B cell (primary cell): ENCODE measurements at regions of chr10 and their contacts with region 1.

Region 1: GRCh38 chr10:32055813-32056600 is at the start of gene KIF5B:
- DNase-seq: peak; percentile 93
- ATAC-seq: peak; percentile 85
- H3K4me3 ChIP-seq: peak within 1 kb of the TSS; percentile 64 to 97 (median 85)
- H3K4me3 Mint-ChIP-seq: peak within 1 kb of the TSS; percentile 98
- H3K27ac ChIP-seq: peak within 1 kb of the TSS; percentile 80 to 90
- H3K27ac Mint-ChIP-seq: peak within 1 kb of the TSS; percentile 97
- H3K4me1 ChIP-seq: peaks cover 31 to 47% of the 10 kb centered on the region in 2 donors
- H3K4me1 Mint-ChIP-seq: peaks cover 53% of the 10 kb centered on the region
- H3K27me3 ChIP-seq: no peaks in the 10 kb centered on the region
- H3K27me3 Mint-ChIP-seq: no peaks in the 10 kb centered on the region
- CTCF ChIP-seq: no peak
- total RNA-seq, gene KIF5B: 40.1 and 44.1 TPM in 2 replicates

Region 2: DNA sequence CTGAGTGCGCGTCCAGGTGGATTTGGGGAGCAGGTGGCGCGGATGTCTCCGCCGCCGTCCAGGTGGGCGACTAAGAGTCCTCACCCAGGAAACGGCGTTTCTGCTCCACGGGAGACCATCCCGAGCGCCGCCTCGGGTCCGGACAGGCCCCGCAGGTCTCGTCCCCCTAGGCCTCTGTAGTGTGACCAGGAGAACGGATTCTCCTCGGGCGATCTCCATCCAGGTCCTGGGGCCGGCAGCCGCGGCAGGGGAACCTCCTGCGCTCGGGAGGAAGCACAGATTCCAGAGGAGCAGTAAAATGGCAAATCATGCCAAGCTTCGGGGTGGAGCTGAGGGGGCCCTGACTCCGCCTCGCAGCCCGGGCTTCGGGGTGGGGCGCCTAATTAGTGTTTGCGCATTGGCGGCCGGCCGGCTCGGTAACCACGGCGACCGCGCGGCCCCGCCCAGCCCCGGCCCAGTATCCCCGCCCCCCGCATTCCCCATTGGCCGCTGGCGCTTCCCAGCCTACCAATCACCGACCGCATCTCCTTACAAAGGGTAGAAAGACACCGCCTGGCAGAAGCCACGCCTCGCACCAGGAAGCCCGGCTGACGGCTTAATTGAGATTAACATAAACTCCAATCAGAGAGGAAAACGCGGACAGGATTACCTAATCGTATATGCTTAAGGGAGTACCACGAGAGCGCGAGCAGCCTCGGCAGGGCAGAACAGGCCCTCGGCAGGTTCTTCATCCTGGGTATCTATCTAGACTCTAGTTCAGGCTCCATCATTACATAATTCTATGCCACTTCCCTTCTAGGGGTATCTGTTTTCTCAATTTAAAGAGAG is 296.0 kb before region 1 on chr10:
- CTCF ChIA-PET with region 1: no interaction called
- POLR2A ChIA-PET with region 1: no interaction called
- intact Hi-C with region 1: loop called (anchors 1 kb)
- DNase-seq: peak; percentile 96
- ATAC-seq: peak; percentile 93
- H3K4me3 ChIP-seq: peak overlapping the region; percentile 71 to 98 (median 94)
- H3K4me3 Mint-ChIP-seq: peak overlapping the region; percentile 92
- H3K27ac ChIP-seq: peak overlapping the region; percentile 85 to 86
- H3K27ac Mint-ChIP-seq: peak overlapping the region; percentile 97
- H3K4me1 ChIP-seq: peaks cover 5 to 14% of the 10 kb centered on the region in 2 donors
- H3K4me1 Mint-ChIP-seq: peaks cover 15% of the 10 kb centered on the region
- H3K27me3 ChIP-seq: no peaks in the 10 kb centered on the region
- H3K27me3 Mint-ChIP-seq: no peaks in the 10 kb centered on the region
- CTCF ChIP-seq: no peak

Region 3: GRCh38 chr10:31906039-31906438 is 150.0 kb before region 1 on chr10:
- CTCF ChIA-PET with region 1: no interaction called
- POLR2A ChIA-PET with region 1: no interaction called
- intact Hi-C with region 1: no loop called
- DNase-seq: no peak
- ATAC-seq: no peak
- H3K4me3 ChIP-seq: no peak overlapping the region
- H3K4me3 Mint-ChIP-seq: no peak overlapping the region
- H3K27ac ChIP-seq: no peak overlapping the region
- H3K27ac Mint-ChIP-seq: no peak overlapping the region
- H3K4me1 ChIP-seq: peaks cover 3 to 4% of the 10 kb centered on the region in 2 donors
- H3K4me1 Mint-ChIP-seq: peaks cover 37% of the 10 kb centered on the region
- H3K27me3 ChIP-seq: no peaks in the 10 kb centered on the region
- H3K27me3 Mint-ChIP-seq: no peaks in the 10 kb centered on the region
- CTCF ChIP-seq: no peak

Region 4: DNA sequence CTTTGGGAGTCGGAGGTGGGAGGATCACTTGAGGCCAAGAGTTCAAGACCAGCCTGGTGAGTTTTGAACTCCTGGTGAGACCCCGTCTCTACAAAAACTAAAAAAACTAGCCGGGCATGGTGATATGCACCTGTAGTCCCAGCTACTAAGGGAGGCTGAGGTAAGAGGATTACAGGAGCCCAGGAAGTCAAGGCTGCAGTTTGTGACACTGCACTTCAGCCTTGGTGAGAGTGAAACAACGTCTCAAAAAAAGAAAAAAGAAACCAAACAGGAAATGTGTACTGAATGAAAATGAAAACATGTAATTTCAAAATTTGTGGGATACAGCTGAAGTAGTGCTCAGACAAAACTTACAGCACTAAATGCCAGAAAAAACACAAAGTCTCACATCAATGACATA is 135.0 kb before region 1 on chr10:
- CTCF ChIA-PET with region 1: no interaction called
- POLR2A ChIA-PET with region 1: no interaction called
- intact Hi-C with region 1: no loop called
- DNase-seq: no peak
- ATAC-seq: no peak
- H3K4me3 ChIP-seq: no peak overlapping the region
- H3K4me3 Mint-ChIP-seq: no peak overlapping the region
- H3K27ac ChIP-seq: no peak overlapping the region
- H3K27ac Mint-ChIP-seq: no peak overlapping the region
- H3K4me1 ChIP-seq: peaks cover 21 to 26% of the 10 kb centered on the region in 2 donors
- H3K4me1 Mint-ChIP-seq: peaks cover 48% of the 10 kb centered on the region
- H3K27me3 ChIP-seq: no peaks in the 10 kb centered on the region
- H3K27me3 Mint-ChIP-seq: no peaks in the 10 kb centered on the region
- CTCF ChIP-seq: no peak

Region 5: DNA sequence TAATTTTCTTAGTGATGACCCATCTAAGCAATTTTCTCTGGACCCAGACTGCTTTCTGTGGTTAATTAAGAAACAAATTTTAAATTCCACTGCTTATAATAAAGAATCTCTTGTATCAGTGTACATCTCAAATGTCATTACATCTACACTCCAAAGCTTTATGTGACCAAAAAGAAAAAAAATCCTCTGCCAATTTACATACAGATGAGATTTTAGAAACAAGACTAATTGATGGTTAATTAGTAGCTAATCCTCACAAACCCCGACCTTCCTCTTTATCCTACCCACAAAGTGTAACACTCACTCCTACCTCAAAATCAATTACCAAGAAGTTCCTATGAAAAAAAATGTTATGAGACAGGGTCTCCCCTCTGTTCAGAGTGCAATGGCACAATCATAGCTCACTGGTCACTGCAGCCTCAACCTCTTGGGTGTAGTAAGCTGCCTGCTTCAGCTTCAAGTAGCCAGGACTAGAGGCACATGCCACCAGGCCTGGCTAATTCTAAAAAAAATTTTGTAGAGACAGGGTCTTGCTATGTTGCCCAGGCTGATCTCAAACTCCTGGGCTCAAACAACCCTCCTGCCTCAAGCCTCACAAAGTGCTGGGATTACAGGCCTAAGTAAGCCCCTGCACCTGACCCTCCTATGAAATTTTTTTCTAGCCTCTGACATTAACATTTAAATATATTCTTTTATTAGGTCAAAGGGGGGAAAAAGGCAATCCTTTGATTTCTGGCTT is 14.5 kb before region 1 on chr10:
- CTCF ChIA-PET with region 1: interaction called, 3 read pairs
- POLR2A ChIA-PET with region 1: no interaction called
- intact Hi-C with region 1: loop called (anchors 2 kb)
- DNase-seq: no peak
- ATAC-seq: no peak
- H3K4me3 ChIP-seq: no peak overlapping the region
- H3K4me3 Mint-ChIP-seq: no peak overlapping the region
- H3K27ac ChIP-seq: peak overlapping the region in 1 of 2 donors; percentile 32
- H3K27ac Mint-ChIP-seq: no peak overlapping the region
- H3K4me1 ChIP-seq: no peaks in the 10 kb centered on the region
- H3K4me1 Mint-ChIP-seq: peaks cover 34% of the 10 kb centered on the region
- H3K27me3 ChIP-seq: no peaks in the 10 kb centered on the region
- H3K27me3 Mint-ChIP-seq: no peaks in the 10 kb centered on the region
- CTCF ChIP-seq: no peak

Region 6: DNA sequence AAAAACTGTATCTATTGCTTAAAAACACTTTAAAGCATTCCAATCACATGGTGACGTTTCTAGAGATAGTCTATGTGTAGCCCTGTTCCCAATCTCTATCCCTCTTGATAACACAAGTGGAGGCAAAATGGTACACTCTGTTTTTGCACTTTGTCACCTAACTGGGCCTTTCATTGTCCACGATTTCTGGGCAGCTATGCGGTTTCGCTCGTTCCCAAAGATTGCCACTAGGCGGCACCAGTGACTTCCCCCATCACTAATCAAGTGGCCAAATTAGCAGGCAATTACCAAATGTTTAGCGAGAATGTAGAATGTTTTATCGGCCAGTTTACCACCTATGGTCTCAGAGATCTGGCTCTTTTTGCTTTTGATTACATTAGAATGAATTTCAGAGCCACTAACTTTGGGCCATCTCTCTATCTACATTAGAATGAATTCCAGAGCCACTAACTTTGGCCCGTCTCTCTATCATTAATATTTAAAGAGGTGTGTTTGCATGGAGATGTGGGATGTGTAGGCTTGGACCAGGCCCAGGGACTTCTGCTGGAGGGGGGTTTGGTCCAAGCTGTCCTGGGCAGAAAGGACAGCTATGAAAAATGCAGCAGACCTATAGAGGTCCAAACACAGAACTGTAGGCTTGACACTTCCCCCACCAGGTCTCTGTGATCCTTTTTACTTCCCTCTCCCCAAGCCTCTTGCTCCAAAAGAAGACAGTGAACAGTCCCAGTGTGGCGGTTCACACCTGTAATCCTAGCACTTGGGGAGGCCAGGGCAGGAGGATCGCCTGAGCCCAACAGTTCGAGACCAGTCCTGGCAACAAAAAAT is 200.8 kb after region 1 on chr10:
- CTCF ChIA-PET with region 1: no interaction called
- POLR2A ChIA-PET with region 1: no interaction called
- intact Hi-C with region 1: loop called (anchors 2 kb)
- DNase-seq: peak; percentile 81
- ATAC-seq: peak; percentile 92
- H3K4me3 ChIP-seq: no peak overlapping the region
- H3K4me3 Mint-ChIP-seq: peak overlapping the region; percentile 16
- H3K27ac ChIP-seq: no peak overlapping the region
- H3K27ac Mint-ChIP-seq: no peak overlapping the region
- H3K4me1 ChIP-seq: peaks cover 3 to 7% of the 10 kb centered on the region in 2 donors
- H3K4me1 Mint-ChIP-seq: peaks cover 6% of the 10 kb centered on the region
- H3K27me3 ChIP-seq: no peaks in the 10 kb centered on the region
- H3K27me3 Mint-ChIP-seq: no peaks in the 10 kb centered on the region
- CTCF ChIP-seq: peak; percentile 93

Region 7: GRCh38 chr10:32378363-32379317 is 322.6 kb after region 1 on chr10:
- CTCF ChIA-PET with region 1: no interaction called
- POLR2A ChIA-PET with region 1: interaction called, 4 read pairs
- intact Hi-C with region 1: loop called (anchors 1 kb)
- DNase-seq: peak; percentile 90
- ATAC-seq: peak; percentile 95
- H3K4me3 ChIP-seq: peak overlapping the region; percentile 63 to 99 (median 83)
- H3K4me3 Mint-ChIP-seq: no peak overlapping the region
- H3K27ac ChIP-seq: peak overlapping the region; percentile 73 to 85
- H3K27ac Mint-ChIP-seq: no peak overlapping the region
- H3K4me1 ChIP-seq: peaks cover 10 to 23% of the 10 kb centered on the region in 2 donors
- H3K4me1 Mint-ChIP-seq: peaks cover 20% of the 10 kb centered on the region
- H3K27me3 ChIP-seq: no peaks in the 10 kb centered on the region
- H3K27me3 Mint-ChIP-seq: no peaks in the 10 kb centered on the region
- CTCF ChIP-seq: no peak

Region 8: GRCh38 chr10:32445740-32446535 is 389.9 kb after region 1 on chr10 and contains the start of gene CCDC7:
- CTCF ChIA-PET with region 1: no interaction called
- POLR2A ChIA-PET with region 1: no interaction called
- intact Hi-C with region 1: loop called (anchors 5 kb)
- DNase-seq: peak; percentile 93
- ATAC-seq: peak; percentile 99
- H3K4me3 ChIP-seq: peak within 1 kb of the TSS; percentile 93 to 99 (median 98)
- H3K4me3 Mint-ChIP-seq: peak within 1 kb of the TSS; percentile 98
- H3K27ac ChIP-seq: peak within 1 kb of the TSS; percentile 95 to 99
- H3K27ac Mint-ChIP-seq: peak within 1 kb of the TSS; percentile 100
- H3K4me1 ChIP-seq: peaks cover 7 to 8% of the 10 kb centered on the region in 2 donors
- H3K4me1 Mint-ChIP-seq: peaks cover 13% of the 10 kb centered on the region
- H3K27me3 ChIP-seq: peaks cover 0 to 4% (median 0%) of the 10 kb centered on the region in 4 experiments
- H3K27me3 Mint-ChIP-seq: peaks cover 16% of the 10 kb centered on the region
- CTCF ChIP-seq: peak; percentile 65
- total RNA-seq, gene CCDC7: 23.5 and 26.6 TPM in 2 replicates